ENCODE measurements at regions of chrX and their contacts with region 1.

Region 1: DNA sequence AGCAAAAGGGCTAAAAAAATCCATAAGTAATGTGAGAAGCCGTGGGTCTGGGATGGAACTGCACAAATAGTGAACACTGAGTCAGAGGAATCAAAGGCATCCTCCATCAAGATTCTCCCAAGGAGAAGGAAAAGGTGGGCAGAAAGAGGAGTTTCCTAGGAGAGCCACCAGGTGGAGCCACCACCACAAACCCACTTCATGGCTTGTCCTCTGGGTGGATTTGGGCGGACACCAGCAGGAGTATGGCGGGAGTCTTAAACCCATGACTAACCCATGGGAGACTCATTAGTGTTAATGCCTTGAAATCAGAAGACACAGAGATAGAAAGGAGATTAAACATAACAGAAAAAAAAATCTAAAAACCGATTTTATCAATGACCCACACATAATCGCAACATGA is 147.7 kb downstream of the SH3KBP1 start:
- DNase-seq: peak; percentile 40 to 61 (median 52)
- ATAC-seq: peak in 3 of 4 donors; percentile 61 to 77 (median 73)
- H3K4me3 ChIP-seq: no peak overlapping the region
- H3K27ac ChIP-seq: no peak overlapping the region
- H3K4me1 ChIP-seq: peaks cover 0 to 9% (median 0%) of the 10 kb centered on the region in 12 donors
- H3K27me3 ChIP-seq: peaks cover 0 to 10% (median 0%) of the 10 kb centered on the region in 9 donors
- CTCF ChIP-seq: peak; percentile 49 to 70 (median 60)
- POLR2A ChIP-seq: no peak

Region 2: DNA sequence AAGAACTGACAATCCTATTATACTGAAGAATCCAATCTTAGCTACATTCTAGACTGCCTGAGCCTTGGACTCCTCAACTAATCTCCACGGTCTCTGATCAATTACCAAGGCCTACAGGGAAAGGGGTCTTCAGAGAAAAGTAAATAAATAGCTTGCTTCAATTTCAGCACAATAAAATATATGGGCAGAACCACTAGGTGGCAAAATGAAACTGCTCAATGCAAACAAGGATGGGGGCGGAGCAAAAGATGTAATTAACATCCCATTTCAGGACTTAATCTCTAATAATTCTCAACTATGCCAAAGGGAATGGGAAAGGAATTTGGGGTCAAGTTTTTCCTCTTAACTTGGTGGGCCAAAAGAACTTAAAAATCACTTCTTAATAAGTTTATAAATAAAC is 146.0 kb before region 1 on chrX:
- intact Hi-C with region 1: loop called in 5 of 10 experiments (anchors 2 to 10 kb)
- DNase-seq: peak in 1 of 5 donors; percentile 12
- ATAC-seq: peak in 1 of 4 donors; percentile 32
- H3K4me3 ChIP-seq: no peak overlapping the region
- H3K27ac ChIP-seq: no peak overlapping the region
- H3K4me1 ChIP-seq: peaks cover 0 to 21% (median 4%) of the 10 kb centered on the region in 12 donors
- H3K27me3 ChIP-seq: no peaks in the 10 kb centered on the region
- CTCF ChIP-seq: peak; percentile 25 to 56 (median 47)
- POLR2A ChIP-seq: no peak

Region 3: GRCh38 chrX:20128670-20129069 is 389.0 kb after region 1 on chrX:
- intact Hi-C with region 1: loop called in 1 of 10 experiments (anchors 5 kb)
- DNase-seq: no peak
- ATAC-seq: peak in 1 of 4 donors; percentile 49
- H3K4me3 ChIP-seq: no peak overlapping the region
- H3K27ac ChIP-seq: no peak overlapping the region
- H3K4me1 ChIP-seq: peaks cover 0 to 8% (median 0%) of the 10 kb centered on the region in 12 donors
- H3K27me3 ChIP-seq: no peaks in the 10 kb centered on the region
- CTCF ChIP-seq: no peak
- POLR2A ChIP-seq: no peak

Measured in heart left ventricle (tissue), 16 donors.